Heart left ventricle (tissue), 16 donors: ENCODE measurements at regions of chr16 and their contacts with region 1.

Region 1: GRCh38 chr16:20156785-20157184 is 83.1 kb upstream of the GPR139 start:
- DNase-seq: no peak
- ATAC-seq: no peak
- H3K4me3 ChIP-seq: no peak overlapping the region
- H3K27ac ChIP-seq: no peak overlapping the region
- H3K4me1 ChIP-seq: no peaks in the 10 kb centered on the region
- H3K27me3 ChIP-seq: no peaks in the 10 kb centered on the region
- CTCF ChIP-seq: no peak
- POLR2A ChIP-seq: no peak

Region 2: GRCh38 chr16:19432429-19432828 is 724.4 kb before region 1 on chr16:
- intact Hi-C with region 1: no loop called
- DNase-seq: no peak
- ATAC-seq: no peak
- H3K4me3 ChIP-seq: no peak overlapping the region
- H3K27ac ChIP-seq: no peak overlapping the region
- H3K4me1 ChIP-seq: no peaks in the 10 kb centered on the region
- H3K27me3 ChIP-seq: peaks cover 0 to 18% (median 0%) of the 10 kb centered on the region in 9 donors
- CTCF ChIP-seq: no peak
- POLR2A ChIP-seq: no peak

Region 3: DNA sequence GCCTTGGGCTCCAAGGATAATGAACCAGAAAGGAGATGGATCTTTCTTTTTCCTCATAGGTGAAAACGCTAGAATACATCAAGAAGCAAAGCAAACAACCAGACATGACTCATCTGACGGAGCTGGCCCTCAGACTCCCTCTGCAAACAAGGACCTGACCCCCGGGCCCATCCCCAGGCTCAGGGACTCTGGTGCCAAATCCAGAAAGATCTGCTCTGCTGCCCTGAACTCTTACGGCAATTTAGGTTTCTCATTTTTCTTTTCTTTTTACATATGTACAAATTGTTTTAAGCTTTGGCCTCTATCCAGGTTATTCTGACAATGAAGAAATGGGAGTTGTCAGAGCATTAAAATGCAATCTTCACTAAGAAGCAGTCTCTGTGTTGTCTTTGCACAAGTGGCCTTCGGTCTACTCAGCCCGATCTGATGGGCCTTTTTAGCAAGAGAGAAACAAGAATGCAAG is 456.4 kb before region 1 on chr16:
- intact Hi-C with region 1: no loop called
- DNase-seq: no peak
- ATAC-seq: no peak
- H3K4me3 ChIP-seq: no peak overlapping the region
- H3K27ac ChIP-seq: peak overlapping the region in 11 of 12 donors; percentile 17 to 68 (median 49)
- H3K4me1 ChIP-seq: peaks cover 18 to 81% (median 51%) of the 10 kb centered on the region in 12 donors
- H3K27me3 ChIP-seq: no peaks in the 10 kb centered on the region
- CTCF ChIP-seq: no peak
- POLR2A ChIP-seq: no peak

Region 4: DNA sequence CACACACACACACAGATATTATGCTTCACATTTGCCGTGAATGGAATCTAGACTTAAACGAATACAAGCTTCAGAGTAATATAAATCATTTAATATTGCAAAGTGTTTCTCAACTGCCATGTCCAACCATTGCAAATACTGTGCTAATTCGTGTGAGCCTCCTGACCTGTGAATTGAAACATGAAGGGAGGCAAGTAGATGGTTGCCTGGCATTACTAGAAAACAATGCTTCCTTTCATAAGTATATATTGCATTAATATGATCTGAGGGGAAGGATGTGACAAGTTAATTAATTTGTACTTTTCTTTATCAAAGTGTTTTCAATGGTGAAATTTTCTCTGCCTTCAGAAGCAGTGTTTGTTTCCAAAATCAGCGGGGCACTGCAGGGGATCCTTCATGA is 57.4 kb before region 1 on chr16:
- intact Hi-C with region 1: loop called in 1 of 10 experiments (anchors 10 kb)
- DNase-seq: no peak
- ATAC-seq: no peak
- H3K4me3 ChIP-seq: no peak overlapping the region
- H3K27ac ChIP-seq: no peak overlapping the region
- H3K4me1 ChIP-seq: no peaks in the 10 kb centered on the region
- H3K27me3 ChIP-seq: peaks cover 0 to 14% (median 0%) of the 10 kb centered on the region in 9 donors
- CTCF ChIP-seq: no peak
- POLR2A ChIP-seq: no peak

Region 5: GRCh38 chr16:20203272-20203671 is 46.5 kb after region 1 on chr16:
- intact Hi-C with region 1: no loop called
- DNase-seq: no peak
- ATAC-seq: no peak
- H3K4me3 ChIP-seq: no peak overlapping the region
- H3K27ac ChIP-seq: no peak overlapping the region
- H3K4me1 ChIP-seq: no peaks in the 10 kb centered on the region
- H3K27me3 ChIP-seq: peaks cover 0 to 25% (median 0%) of the 10 kb centered on the region in 9 donors
- CTCF ChIP-seq: no peak
- POLR2A ChIP-seq: no peak